GM13976 (cell line): ENCODE measurements at regions of chr12 and their contacts with region 1.

Region 1: DNA sequence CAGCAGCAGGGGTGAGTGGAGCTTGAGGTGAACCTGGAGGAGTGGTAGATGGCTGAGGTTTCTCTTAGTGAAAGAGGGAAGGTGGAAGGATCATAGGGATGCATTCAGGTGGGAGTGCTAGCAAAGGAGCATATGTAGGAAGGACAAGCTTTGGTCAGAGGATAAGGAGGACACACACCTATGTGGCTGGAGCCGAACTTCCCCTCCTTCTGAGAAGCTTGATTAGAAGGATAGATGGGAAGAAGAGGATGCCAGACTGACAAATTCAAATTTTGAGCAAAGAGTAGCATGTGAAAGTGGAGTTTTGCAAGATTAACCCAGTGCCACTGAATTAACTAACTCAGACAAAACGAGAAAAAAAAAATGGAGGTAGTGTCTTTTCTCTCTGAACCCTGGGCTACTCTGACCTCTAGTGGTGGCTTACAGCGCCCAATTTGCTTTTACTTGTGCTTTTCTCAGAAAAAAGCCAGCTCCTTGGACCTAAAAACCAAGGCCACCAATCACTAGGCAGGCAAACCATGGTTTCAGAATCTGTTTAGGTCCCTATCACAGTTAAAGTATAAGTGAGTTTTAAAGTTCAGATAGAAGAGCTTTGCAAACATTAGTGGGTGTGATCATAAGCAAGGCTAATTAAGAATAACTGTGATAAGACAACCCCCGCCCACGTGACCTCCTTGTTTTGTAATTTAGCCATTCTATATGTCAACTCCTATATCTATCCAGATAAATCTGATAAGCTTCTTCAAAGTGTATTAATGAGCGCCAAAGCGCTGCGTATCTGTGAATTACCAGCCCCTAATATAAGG is 15.5 kb downstream of the EMP1 start:
- DNase-seq: peak; percentile 59
- CTCF ChIP-seq: peak; percentile 53

Region 2: GRCh38 chr12:12696562-12697383 is 515.3 kb before region 1 on chr12:
- in situ Hi-C with region 1: no loop called
- DNase-seq: peak; percentile 79
- CTCF ChIP-seq: no peak

Region 3: DNA sequence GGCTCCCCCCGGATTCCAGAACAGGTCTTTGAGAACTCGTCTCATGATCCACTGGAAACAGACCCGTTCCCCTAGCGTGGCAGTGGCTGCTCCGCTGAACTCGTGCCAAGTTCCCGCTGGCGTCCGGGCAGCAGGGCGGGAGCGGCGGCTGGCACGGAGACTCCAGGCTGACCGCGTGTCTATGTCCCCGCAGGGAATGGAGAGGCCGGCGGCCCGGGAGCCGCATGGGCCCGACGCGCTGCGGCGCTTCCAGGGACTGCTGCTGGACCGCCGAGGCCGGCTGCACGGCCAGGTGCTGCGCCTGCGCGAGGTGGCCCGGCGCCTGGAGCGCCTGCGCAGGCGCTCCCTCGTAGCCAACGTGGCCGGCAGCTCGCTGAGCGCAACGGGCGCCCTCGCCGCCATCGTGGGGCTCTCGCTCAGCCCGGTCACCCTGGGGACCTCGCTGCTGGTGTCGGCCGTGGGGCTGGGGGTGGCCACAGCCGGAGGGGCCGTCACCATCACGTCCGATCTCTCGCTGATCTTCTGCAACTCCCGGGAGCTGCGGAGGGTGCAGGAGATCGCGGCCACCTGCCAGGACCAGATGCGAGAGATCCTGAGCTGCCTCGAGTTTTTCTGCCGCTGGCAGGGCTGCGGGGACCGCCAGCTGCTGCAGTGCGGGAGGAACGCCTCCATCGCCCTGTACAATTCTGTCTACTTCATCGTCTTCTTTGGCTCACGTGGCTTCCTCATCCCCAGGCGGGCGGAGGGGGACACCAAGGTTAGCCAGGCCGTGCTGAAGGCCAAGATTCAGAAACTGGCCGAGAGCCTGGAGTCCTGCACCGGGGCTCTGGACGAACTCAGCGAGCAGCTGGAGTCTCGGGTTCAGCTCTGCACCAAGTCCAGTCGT is 425.1 kb before region 1 on chr12:
- in situ Hi-C with region 1: loop called (anchors 25 kb)
- DNase-seq: peak; percentile 96
- CTCF ChIP-seq: no peak

Region 4: GRCh38 chr12:12909995-12910391 is 302.1 kb before region 1 on chr12:
- in situ Hi-C with region 1: loop called (anchors 5 kb)
- DNase-seq: no peak
- CTCF ChIP-seq: no peak